ENCODE measurements at regions of chr10 and their contacts with region 1.

Region 1: GRCh38 chr10:112140110-112140970 is 43.2 kb downstream of the GPAM start:
- DNase-seq: peak; percentile 80
- CTCF ChIP-seq: peak; percentile 96

Region 2: GRCh38 chr10:110610308-110610774 is 1530.0 kb before region 1 on chr10:
- CTCF ChIA-PET with region 1: interaction called, 12 read pairs
- POLR2A ChIA-PET with region 1: no interaction called
- DNase-seq: peak; percentile 61
- CTCF ChIP-seq: peak; percentile 69

Region 3: GRCh38 chr10:110803830-110804338 is 1336.5 kb before region 1 on chr10:
- CTCF ChIA-PET with region 1: no interaction called
- POLR2A ChIA-PET with region 1: no interaction called
- DNase-seq: peak; percentile 70
- CTCF ChIP-seq: peak; percentile 83

Region 4: DNA sequence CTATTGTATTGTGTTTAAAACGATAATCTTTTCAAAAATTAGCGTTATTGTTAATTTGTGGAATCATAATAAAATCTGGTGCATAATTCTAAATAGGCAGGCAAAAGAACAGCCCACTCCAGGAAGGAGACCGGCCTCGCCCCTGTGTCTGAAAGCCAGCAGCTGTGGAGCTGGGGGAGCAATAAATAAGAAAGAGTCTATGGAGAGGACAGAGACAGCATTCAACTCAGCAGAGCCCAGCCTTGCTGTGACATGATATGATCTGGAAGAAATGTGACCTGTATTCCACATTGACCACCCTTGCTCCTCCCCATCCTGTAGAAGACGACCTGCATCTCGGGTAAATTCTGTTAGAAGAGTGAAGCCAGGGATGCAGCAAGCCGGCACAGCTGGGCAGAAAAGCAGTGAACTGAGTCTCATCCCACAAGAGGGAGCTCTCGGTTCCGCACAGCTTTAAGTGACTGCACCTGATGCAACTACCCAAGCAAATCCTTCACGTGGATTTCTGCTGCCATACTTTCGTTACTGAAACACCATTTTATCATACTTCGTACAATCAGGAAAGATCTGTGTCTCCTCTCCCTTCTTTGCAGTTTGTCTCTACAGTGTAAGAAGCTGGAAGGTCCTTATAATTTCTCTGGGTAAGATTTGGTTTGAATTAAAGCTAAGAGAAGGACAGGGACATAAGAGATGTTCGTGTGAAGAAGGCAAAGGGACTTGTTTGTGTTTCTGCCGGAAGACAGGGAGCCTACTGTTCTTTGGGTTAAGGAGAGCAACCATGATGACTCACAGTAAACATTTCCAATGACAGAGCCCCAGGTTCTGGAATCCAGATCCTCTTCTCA is 383.9 kb before region 1 on chr10:
- CTCF ChIA-PET with region 1: interaction called, 10 read pairs
- POLR2A ChIA-PET with region 1: no interaction called
- DNase-seq: peak; percentile 9
- CTCF ChIP-seq: peak; percentile 37

Region 5: GRCh38 chr10:112115799-112116385 is 24.4 kb before region 1 on chr10:
- CTCF ChIA-PET with region 1: interaction called, 250 read pairs
- POLR2A ChIA-PET with region 1: no interaction called
- DNase-seq: peak; percentile 72
- CTCF ChIP-seq: peak; percentile 74

Region 6: GRCh38 chr10:112173206-112173605 is 32.9 kb after region 1 on chr10:
- CTCF ChIA-PET with region 1: interaction called, 42 read pairs
- POLR2A ChIA-PET with region 1: no interaction called
- DNase-seq: no peak
- CTCF ChIP-seq: no peak

Region 7: GRCh38 chr10:112314822-112315474 is 174.6 kb after region 1 on chr10:
- CTCF ChIA-PET with region 1: interaction called, 113 read pairs
- POLR2A ChIA-PET with region 1: no interaction called
- DNase-seq: peak; percentile 72
- CTCF ChIP-seq: peak; percentile 81

Region 8: GRCh38 chr10:112471878-112472487 is 331.6 kb after region 1 on chr10:
- CTCF ChIA-PET with region 1: interaction called, 26 read pairs
- POLR2A ChIA-PET with region 1: no interaction called
- DNase-seq: peak; percentile 65
- CTCF ChIP-seq: peak; percentile 59